Gastrocnemius medialis (tissue), 4 donors: ENCODE measurements at regions of chr9 and their contacts with region 1.

Region 1: GRCh38 chr9:21110708-21111576 is 30.7 kb downstream of the IFNW1 start:
- DNase-seq: no peak
- ATAC-seq: peak; percentile 54 to 84
- H3K4me3 ChIP-seq: no peak overlapping the region
- H3K27ac ChIP-seq: no peak overlapping the region
- H3K4me1 ChIP-seq: no peaks in the 10 kb centered on the region
- H3K27me3 ChIP-seq: no peaks in the 10 kb centered on the region
- CTCF ChIP-seq: peak; percentile 37 to 80 (median 70)
- POLR2A ChIP-seq: no peak

Region 2: GRCh38 chr9:19493174-19493811 is 1617.6 kb before region 1 on chr9:
- in situ Hi-C with region 1: loop called in 1 of 4 experiments (anchors 25 kb)
- intact Hi-C with region 1: no loop called
- DNase-seq: no peak
- ATAC-seq: peak; percentile 66 to 86
- H3K4me3 ChIP-seq: peak overlapping the region; percentile 22 to 47 (median 43)
- H3K27ac ChIP-seq: peak overlapping the region; percentile 17 to 43 (median 32)
- H3K4me1 ChIP-seq: peaks cover 0 to 4% of the 10 kb centered on the region in 2 donors
- H3K27me3 ChIP-seq: no peaks in the 10 kb centered on the region
- CTCF ChIP-seq: peak in 3 of 5 experiments; percentile 49 to 62 (median 56)
- POLR2A ChIP-seq: no peak

Region 3: GRCh38 chr9:19925817-19926503 is 1185.0 kb before region 1 on chr9:
- in situ Hi-C with region 1: loop called (anchors 5 to 10 kb)
- intact Hi-C with region 1: no loop called
- DNase-seq: peak; percentile 37 to 43
- ATAC-seq: peak; percentile 88 to 96
- H3K4me3 ChIP-seq: peak overlapping the region; percentile 37 to 62 (median 52)
- H3K27ac ChIP-seq: no peak overlapping the region
- H3K4me1 ChIP-seq: peaks cover 0 to 3% of the 10 kb centered on the region in 2 donors
- H3K27me3 ChIP-seq: no peaks in the 10 kb centered on the region
- CTCF ChIP-seq: peak; percentile 86 to 95 (median 90)
- POLR2A ChIP-seq: no peak

Region 4: GRCh38 chr9:20884985-20885593 is 225.9 kb before region 1 on chr9:
- in situ Hi-C with region 1: loop called in 3 of 4 experiments (anchors 10 to 25 kb)
- intact Hi-C with region 1: loop called (anchors 5 kb)
- DNase-seq: peak in 1 of 2 donors; percentile 23
- ATAC-seq: no peak
- H3K4me3 ChIP-seq: no peak overlapping the region
- H3K27ac ChIP-seq: no peak overlapping the region
- H3K4me1 ChIP-seq: no peaks in the 10 kb centered on the region
- H3K27me3 ChIP-seq: no peaks in the 10 kb centered on the region
- CTCF ChIP-seq: peak in 3 of 5 experiments; percentile 13 to 60 (median 41)
- POLR2A ChIP-seq: no peak

Region 5: GRCh38 chr9:20941174-20941690 is 169.7 kb before region 1 on chr9:
- in situ Hi-C with region 1: no loop called
- intact Hi-C with region 1: loop called (anchors 5 kb)
- DNase-seq: peak; percentile 14 to 18
- ATAC-seq: peak; percentile 87 to 93
- H3K4me3 ChIP-seq: no peak overlapping the region
- H3K27ac ChIP-seq: no peak overlapping the region
- H3K4me1 ChIP-seq: no peaks in the 10 kb centered on the region
- H3K27me3 ChIP-seq: no peaks in the 10 kb centered on the region
- CTCF ChIP-seq: peak; percentile 62 to 87 (median 72)
- POLR2A ChIP-seq: no peak

Region 6: GRCh38 chr9:21174671-21175070 is 63.7 kb after region 1 on chr9:
- in situ Hi-C with region 1: no loop called
- intact Hi-C with region 1: no loop called
- DNase-seq: no peak
- ATAC-seq: no peak
- H3K4me3 ChIP-seq: no peak overlapping the region
- H3K27ac ChIP-seq: no peak overlapping the region
- H3K4me1 ChIP-seq: no peaks in the 10 kb centered on the region
- H3K27me3 ChIP-seq: no peaks in the 10 kb centered on the region
- CTCF ChIP-seq: no peak
- POLR2A ChIP-seq: no peak

Region 7: GRCh38 chr9:21294325-21294724 is 183.4 kb after region 1 on chr9:
- in situ Hi-C with region 1: no loop called
- intact Hi-C with region 1: no loop called
- DNase-seq: no peak
- ATAC-seq: no peak
- H3K4me3 ChIP-seq: no peak overlapping the region
- H3K27ac ChIP-seq: no peak overlapping the region
- H3K4me1 ChIP-seq: no peaks in the 10 kb centered on the region
- H3K27me3 ChIP-seq: no peaks in the 10 kb centered on the region
- CTCF ChIP-seq: no peak
- POLR2A ChIP-seq: no peak